ENCODE measurements at regions of chr12 and their contacts with region 1.

Region 1: GRCh38 chr12:3073438-3074250 is 3.5 kb upstream of the TSPAN9 start:
- DNase-seq: peak; percentile 81 to 93 (median 93)
- ATAC-seq: peak; percentile 43 to 51
- H3K4me3 ChIP-seq: no peak overlapping the region
- H3K27ac ChIP-seq: peak overlapping the region; percentile 50
- H3K4me1 ChIP-seq: peaks cover 6% of the 10 kb centered on the region
- H3K27me3 ChIP-seq: no peaks in the 10 kb centered on the region

Region 2: GRCh38 chr12:3122835-3123678 is 49.4 kb after region 1 on chr12:
- intact Hi-C with region 1: loop called in 1 of 4 experiments (anchors 5 kb)
- DNase-seq: peak; percentile 72 to 83 (median 82)
- ATAC-seq: peak; percentile 76 to 93
- H3K4me3 ChIP-seq: no peak overlapping the region
- H3K27ac ChIP-seq: peak overlapping the region; percentile 72
- H3K4me1 ChIP-seq: peaks cover 32% of the 10 kb centered on the region
- H3K27me3 ChIP-seq: no peaks in the 10 kb centered on the region

Region 3: GRCh38 chr12:3135522-3136461 is 62.1 kb after region 1 on chr12:
- intact Hi-C with region 1: loop called in 3 of 4 experiments (anchors 10 kb)
- DNase-seq: no peak
- ATAC-seq: peak; percentile 34 to 48
- H3K4me3 ChIP-seq: no peak overlapping the region
- H3K27ac ChIP-seq: no peak overlapping the region
- H3K4me1 ChIP-seq: peaks cover 17% of the 10 kb centered on the region
- H3K27me3 ChIP-seq: no peaks in the 10 kb centered on the region

Measured in right cardiac atrium (tissue), 5 donors.